ENCODE measurements at regions of chr5 and their contacts with region 1.

Region 1: GRCh38 chr5:149357370-149358293 is at the start of gene PCYOX1L:
- DNase-seq: peak; percentile 99
- H3K4me3 Mint-ChIP-seq: peak within 1 kb of the TSS; percentile 82
- H3K27ac Mint-ChIP-seq: no peak within 1 kb of the TSS
- H3K4me1 Mint-ChIP-seq: peaks cover 12% of the 10 kb centered on the region
- H3K27me3 Mint-ChIP-seq: no peaks in the 10 kb centered on the region
- CTCF ChIP-seq: no peak
- total RNA-seq, gene PCYOX1L: 7.7 and 8.0 TPM in 2 replicates

Region 2: GRCh38 chr5:149268928-149269557 is 88.6 kb before region 1 on chr5:
- CTCF ChIA-PET with region 1: interaction called, 4 read pairs
- POLR2A ChIA-PET with region 1: interaction called, 3 read pairs
- intact Hi-C with region 1: loop called (anchors 5 kb)
- DNase-seq: peak; percentile 84
- H3K4me3 Mint-ChIP-seq: no peak overlapping the region
- H3K27ac Mint-ChIP-seq: no peak overlapping the region
- H3K4me1 Mint-ChIP-seq: peaks cover 14% of the 10 kb centered on the region
- H3K27me3 Mint-ChIP-seq: no peaks in the 10 kb centered on the region
- CTCF ChIP-seq: peak; percentile 91

Region 3: GRCh38 chr5:149317281-149318048 is 40.2 kb before region 1 on chr5:
- CTCF ChIA-PET with region 1: interaction called, 1,231 read pairs
- POLR2A ChIA-PET with region 1: interaction called, 38 read pairs
- intact Hi-C with region 1: loop called (anchors 5 kb)
- DNase-seq: peak; percentile 71
- H3K4me3 Mint-ChIP-seq: no peak overlapping the region
- H3K27ac Mint-ChIP-seq: no peak overlapping the region
- H3K4me1 Mint-ChIP-seq: peaks cover 12% of the 10 kb centered on the region
- H3K27me3 Mint-ChIP-seq: no peaks in the 10 kb centered on the region
- CTCF ChIP-seq: peak; percentile 78

Region 4: DNA sequence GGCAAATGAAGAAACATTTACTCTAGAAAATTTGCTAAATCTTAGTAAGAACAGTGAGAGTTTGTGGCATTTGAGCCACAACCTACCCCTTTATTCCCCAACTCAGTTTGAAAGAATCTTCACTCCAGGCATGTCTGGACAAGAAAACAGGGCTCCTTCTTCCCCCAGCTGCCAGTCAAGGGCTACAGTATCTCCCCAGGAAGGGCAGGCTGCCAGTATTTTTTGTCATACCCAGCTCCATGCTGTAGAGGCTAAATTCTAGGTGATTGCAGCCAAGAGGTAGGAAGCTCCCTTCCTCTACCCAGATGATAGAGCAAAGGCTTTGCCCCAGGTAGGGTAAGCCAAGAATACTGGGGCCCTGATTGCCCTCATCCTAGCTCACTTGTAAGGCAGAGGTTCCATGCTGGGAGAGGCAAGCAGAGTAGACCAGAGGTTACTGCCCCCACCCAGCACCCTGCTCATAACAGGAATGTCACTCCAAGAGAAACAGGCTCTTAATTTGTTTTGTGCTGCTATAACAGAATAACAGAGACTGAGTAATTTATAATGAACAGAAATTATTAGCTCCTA is 32.4 kb before region 1 on chr5:
- CTCF ChIA-PET with region 1: interaction called, 1,231 read pairs
- POLR2A ChIA-PET with region 1: interaction called, 51 read pairs
- intact Hi-C with region 1: loop called (anchors 5 kb)
- DNase-seq: peak; percentile 92
- H3K4me3 Mint-ChIP-seq: no peak overlapping the region
- H3K27ac Mint-ChIP-seq: peak overlapping the region; percentile 96
- H3K4me1 Mint-ChIP-seq: peaks cover 36% of the 10 kb centered on the region
- H3K27me3 Mint-ChIP-seq: no peaks in the 10 kb centered on the region
- CTCF ChIP-seq: no peak

Measured in MCF 10A (cell line).